Natural killer cell (primary cell): ENCODE measurements at regions of chr16 and their contacts with region 1.

Region 1: DNA sequence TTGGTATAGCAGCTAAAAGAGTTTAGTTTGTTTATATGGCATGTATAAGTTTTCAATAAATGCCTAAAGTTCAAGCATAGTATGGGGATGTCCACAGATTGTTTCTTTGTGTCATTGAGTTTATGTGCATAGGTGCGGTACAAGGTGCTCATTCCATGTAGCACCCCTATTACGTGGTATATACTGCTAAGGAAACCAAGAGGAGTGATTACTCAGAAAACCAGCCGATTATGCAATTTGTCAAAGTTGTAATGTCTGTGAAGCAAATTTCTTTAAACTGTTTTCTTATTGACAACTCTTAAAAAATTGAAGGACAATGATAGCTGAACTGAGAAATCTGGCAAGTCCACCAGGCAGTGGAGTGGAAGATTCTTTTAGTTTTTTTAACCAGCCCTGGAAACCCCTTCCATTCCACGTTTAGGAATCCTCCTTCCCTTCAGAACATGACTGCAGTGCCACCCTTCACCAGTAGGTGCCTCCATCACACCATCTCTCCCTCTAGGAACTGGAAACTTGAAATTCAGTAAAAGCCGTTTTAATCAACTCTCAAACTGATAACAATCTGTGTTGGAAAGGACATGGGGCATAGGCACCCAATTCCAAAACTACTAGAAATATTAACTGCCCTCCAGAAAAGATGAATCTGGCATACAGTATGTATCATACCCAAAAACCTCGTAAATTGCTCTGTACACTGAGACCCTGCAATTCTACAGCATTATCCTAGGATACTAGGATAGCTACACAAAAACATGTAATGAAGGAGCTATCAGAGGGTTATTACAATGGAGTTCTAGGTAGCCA is 43.5 kb downstream of the REXO5 start:
- DNase-seq: peak; percentile 49 to 80
- ATAC-seq: peak; percentile 73 to 80 (median 75)
- H3K4me3 ChIP-seq: no peak overlapping the region
- H3K4me3 Mint-ChIP-seq: no peak overlapping the region
- H3K27ac ChIP-seq: no peak overlapping the region
- H3K27ac Mint-ChIP-seq: no peak overlapping the region
- H3K4me1 ChIP-seq: peaks cover 5% of the 10 kb centered on the region
- H3K4me1 Mint-ChIP-seq: peaks cover 8 to 12% of the 10 kb centered on the region in 2 donors
- H3K27me3 ChIP-seq: no peaks in the 10 kb centered on the region
- H3K27me3 Mint-ChIP-seq: no peaks in the 10 kb centered on the region
- CTCF ChIP-seq: peak; percentile 100

Region 2: DNA sequence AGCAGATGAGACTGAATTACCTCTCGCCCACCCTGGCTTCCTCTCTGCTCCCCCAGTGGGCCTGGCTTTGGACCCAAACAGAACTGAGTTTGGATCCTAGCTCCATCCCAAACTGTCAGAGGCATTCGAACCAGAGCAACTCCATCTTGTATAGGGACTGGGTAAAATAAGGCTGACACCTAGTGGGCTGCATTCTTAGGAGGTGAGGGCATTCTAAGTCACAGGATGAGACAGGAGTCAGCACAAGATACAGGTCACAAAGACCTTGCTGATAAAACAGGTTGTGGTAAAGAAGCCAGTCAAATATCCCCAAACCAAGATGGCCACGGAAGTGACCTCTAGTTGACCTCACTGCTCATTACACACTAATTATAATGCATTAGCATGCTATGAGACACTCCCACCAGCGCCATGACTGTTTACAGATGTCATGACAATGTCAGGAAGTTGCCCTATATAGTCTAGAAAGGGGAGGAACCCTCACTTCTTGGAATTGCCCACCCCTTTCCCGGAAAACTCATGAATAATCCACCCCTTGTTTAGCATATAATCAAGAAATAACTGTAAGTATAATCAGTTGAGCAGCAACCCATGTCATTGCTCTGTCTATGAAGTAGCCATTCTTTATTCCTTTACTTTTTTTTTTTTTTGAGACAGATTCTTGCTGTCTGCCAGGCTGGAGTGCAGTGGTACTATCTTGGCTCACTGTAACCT is 95.2 kb after region 1 on chr16:
- intact Hi-C with region 1: loop called (anchors 5 kb)
- DNase-seq: peak in 1 of 2 donors; percentile 29
- ATAC-seq: peak; percentile 21 to 71 (median 53)
- H3K4me3 ChIP-seq: no peak overlapping the region
- H3K4me3 Mint-ChIP-seq: no peak overlapping the region
- H3K27ac ChIP-seq: no peak overlapping the region
- H3K27ac Mint-ChIP-seq: no peak overlapping the region
- H3K4me1 ChIP-seq: peaks cover 6% of the 10 kb centered on the region
- H3K4me1 Mint-ChIP-seq: peaks cover 8% of the 10 kb centered on the region in 2 donors
- H3K27me3 ChIP-seq: no peaks in the 10 kb centered on the region
- H3K27me3 Mint-ChIP-seq: no peaks in the 10 kb centered on the region
- CTCF ChIP-seq: no peak

Region 3: GRCh38 chr16:21001262-21001661 is 151.5 kb after region 1 on chr16:
- intact Hi-C with region 1: loop called (anchors 5 kb)
- DNase-seq: peak in 1 of 2 donors; percentile 37
- ATAC-seq: peak in 1 of 3 donors; percentile 35
- H3K4me3 ChIP-seq: no peak overlapping the region
- H3K4me3 Mint-ChIP-seq: no peak overlapping the region
- H3K27ac ChIP-seq: no peak overlapping the region
- H3K27ac Mint-ChIP-seq: no peak overlapping the region
- H3K4me1 ChIP-seq: no peaks in the 10 kb centered on the region
- H3K4me1 Mint-ChIP-seq: no peaks in the 10 kb centered on the region
- H3K27me3 ChIP-seq: no peaks in the 10 kb centered on the region
- H3K27me3 Mint-ChIP-seq: peaks cover 0 to 5% of the 10 kb centered on the region in 2 donors
- CTCF ChIP-seq: no peak

Region 4: GRCh38 chr16:21083729-21084268 is 234.0 kb after region 1 on chr16:
- intact Hi-C with region 1: loop called (anchors 1 kb)
- DNase-seq: peak; percentile 24 to 63
- ATAC-seq: peak; percentile 55 to 83 (median 64)
- H3K4me3 ChIP-seq: no peak overlapping the region
- H3K4me3 Mint-ChIP-seq: no peak overlapping the region
- H3K27ac ChIP-seq: no peak overlapping the region
- H3K27ac Mint-ChIP-seq: no peak overlapping the region
- H3K4me1 ChIP-seq: no peaks in the 10 kb centered on the region
- H3K4me1 Mint-ChIP-seq: no peaks in the 10 kb centered on the region
- H3K27me3 ChIP-seq: peaks cover 2% of the 10 kb centered on the region
- H3K27me3 Mint-ChIP-seq: peaks cover 6 to 14% of the 10 kb centered on the region in 2 donors
- CTCF ChIP-seq: peak; percentile 53

Region 5: GRCh38 chr16:21101631-21102420 is 252.0 kb after region 1 on chr16:
- intact Hi-C with region 1: loop called (anchors 5 kb)
- DNase-seq: peak in 1 of 2 donors; percentile 36
- ATAC-seq: peak in 1 of 3 donors; percentile 60
- H3K4me3 ChIP-seq: no peak overlapping the region
- H3K4me3 Mint-ChIP-seq: no peak overlapping the region
- H3K27ac ChIP-seq: no peak overlapping the region
- H3K27ac Mint-ChIP-seq: no peak overlapping the region
- H3K4me1 ChIP-seq: no peaks in the 10 kb centered on the region
- H3K4me1 Mint-ChIP-seq: no peaks in the 10 kb centered on the region
- H3K27me3 ChIP-seq: no peaks in the 10 kb centered on the region
- H3K27me3 Mint-ChIP-seq: peaks cover 19 to 39% of the 10 kb centered on the region in 2 donors
- CTCF ChIP-seq: no peak